HCT116 (cell line): ENCODE measurements at regions of chr1 and their contacts with region 1.

Region 1: GRCh38 chr1:214213136-214213535 is 67.8 kb upstream of the SMYD2 start:
- DNase-seq: no peak
- ATAC-seq: no peak
- H3K4me3 ChIP-seq: no peak overlapping the region
- H3K27ac ChIP-seq: no peak overlapping the region
- H3K4me1 ChIP-seq: peaks cover 0 to 4% of the 10 kb centered on the region in 2 experiments; a peak in 1 of 4 replicates
- H3K27me3 ChIP-seq: peaks cover 7% of the 10 kb centered on the region
- CTCF ChIP-seq: no peak
- POLR2A ChIP-seq: no peak
- RAD21 ChIP-seq: no peak

Region 2: DNA sequence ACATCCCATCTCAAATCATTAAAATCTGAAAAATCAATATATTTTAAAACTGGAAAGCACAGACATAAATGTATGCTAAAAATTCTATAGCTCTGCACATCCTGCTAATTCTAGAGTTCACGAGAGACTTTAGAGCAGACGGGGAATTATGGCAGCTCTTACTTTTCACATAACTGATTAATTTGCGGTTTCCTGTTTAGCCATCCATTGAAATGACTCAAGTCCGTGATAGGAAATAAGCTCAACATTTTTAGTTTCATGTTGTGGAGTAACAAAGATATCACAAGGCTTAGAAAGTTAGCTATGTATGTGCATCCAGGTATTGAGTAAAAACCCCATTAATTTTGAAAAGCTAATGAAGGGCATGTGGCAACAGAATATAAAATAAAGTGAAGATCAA is 191.0 kb after region 1 on chr1:
- CTCF ChIA-PET with region 1: no interaction called
- POLR2A ChIA-PET with region 1: no interaction called
- RAD21 ChIA-PET with region 1: no interaction called
- intact Hi-C with region 1: no loop called
- DNase-seq: no peak
- ATAC-seq: no peak
- H3K4me3 ChIP-seq: no peak overlapping the region
- H3K27ac ChIP-seq: peak overlapping the region; percentile 38; the same call in 1 of the 2 replicates
- H3K4me1 ChIP-seq: peaks cover 24 to 34% of the 10 kb centered on the region in 2 experiments
- H3K27me3 ChIP-seq: no peaks in the 10 kb centered on the region
- CTCF ChIP-seq: no peak
- POLR2A ChIP-seq: no peak
- RAD21 ChIP-seq: no peak

Region 3: GRCh38 chr1:214632091-214632490 is 419.0 kb after region 1 on chr1:
- CTCF ChIA-PET with region 1: interaction called, 8 read pairs
- POLR2A ChIA-PET with region 1: no interaction called
- RAD21 ChIA-PET with region 1: no interaction called
- intact Hi-C with region 1: loop called (anchors 1 kb)
- DNase-seq: no peak
- ATAC-seq: no peak
- H3K4me3 ChIP-seq: no peak overlapping the region
- H3K27ac ChIP-seq: no peak overlapping the region
- H3K4me1 ChIP-seq: no peaks in the 10 kb centered on the region
- H3K27me3 ChIP-seq: no peaks in the 10 kb centered on the region
- CTCF ChIP-seq: no peak
- POLR2A ChIP-seq: no peak
- RAD21 ChIP-seq: no peak